Activated T-helper 1 cell treated with anti-CD3 and anti-CD28 coated beads, Interleukin-12 subunit alpha, Interleukin-12 subunit beta, Interleukin-2, Interleukin-4 antibody, amounts not matched to agents 30 ng/mL and 10 ng/mL and 1 ng/mL, durations not matched to agents 14 hours and 24 hours and 36 hours (primary cell): ENCODE measurements at regions of chr21 and their contacts with region 1.

Region 1: DNA sequence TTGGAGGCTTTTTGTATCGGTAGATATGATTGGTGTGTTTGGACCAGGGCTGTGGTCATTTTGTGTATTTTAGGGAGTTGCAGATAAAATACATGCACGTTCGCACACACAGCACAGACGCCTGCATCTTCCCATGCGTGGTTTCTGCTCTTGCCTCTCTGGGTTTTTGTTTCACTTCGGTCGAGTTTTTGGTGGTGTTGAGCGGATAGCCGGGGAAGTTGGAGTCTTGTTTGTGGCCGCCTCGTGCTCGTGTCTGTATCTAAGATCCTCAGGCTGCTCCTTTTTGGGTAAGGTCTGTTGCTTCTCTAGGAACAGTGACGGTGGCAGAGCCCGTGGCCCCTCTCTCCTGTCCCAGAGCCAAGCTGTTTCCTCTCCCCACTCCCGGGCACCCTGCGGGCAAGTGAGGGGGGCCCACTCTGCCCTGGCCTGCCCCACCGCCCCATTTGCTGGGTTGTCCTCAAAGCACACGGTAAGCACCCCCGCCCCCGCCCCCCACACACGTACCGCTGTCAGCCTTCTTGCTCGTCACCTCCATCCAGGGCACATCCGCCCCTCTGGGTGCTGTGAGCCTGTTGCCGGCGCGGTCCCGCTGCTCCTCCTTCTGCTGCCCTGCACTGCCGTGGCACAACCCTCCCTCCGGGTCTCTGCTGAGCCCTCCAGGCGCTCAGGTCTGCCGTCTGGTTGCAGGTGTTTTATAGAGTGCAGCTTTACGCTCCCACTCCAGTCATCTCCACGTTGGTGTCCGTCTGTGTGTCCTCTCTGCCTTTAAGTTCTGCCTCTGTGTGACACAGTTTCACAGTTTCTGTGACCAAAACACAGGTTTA is 51.9 kb downstream of the AGPAT3 start:
- DNase-seq: peak; percentile 53
- H3K4me3 Mint-ChIP-seq: peak overlapping the region; percentile 81
- H3K27ac Mint-ChIP-seq: peak overlapping the region; percentile 81
- H3K4me1 Mint-ChIP-seq: peaks cover 66% of the 10 kb centered on the region
- H3K27me3 Mint-ChIP-seq: no peaks in the 10 kb centered on the region

Region 2: GRCh38 chr21:43842742-43843141 is 74.2 kb before region 1 on chr21:
- intact Hi-C with region 1: loop called (anchors 2 kb)
- DNase-seq: no peak
- H3K4me3 Mint-ChIP-seq: peak overlapping the region; percentile 25
- H3K27ac Mint-ChIP-seq: peak overlapping the region; percentile 65
- H3K4me1 Mint-ChIP-seq: peaks cover 14% of the 10 kb centered on the region
- H3K27me3 Mint-ChIP-seq: peaks cover 12% of the 10 kb centered on the region

Region 3: GRCh38 chr21:43938751-43939442 is 22.0 kb after region 1 on chr21:
- intact Hi-C with region 1: loop called (anchors 2 kb)
- DNase-seq: peak; percentile 82
- H3K4me3 Mint-ChIP-seq: peak overlapping the region; percentile 76
- H3K27ac Mint-ChIP-seq: peak overlapping the region; percentile 61
- H3K4me1 Mint-ChIP-seq: peaks cover 20% of the 10 kb centered on the region
- H3K27me3 Mint-ChIP-seq: no peaks in the 10 kb centered on the region